Mammary epithelial cell (primary cell): ENCODE measurements at regions of chr6 and their contacts with region 1.

Region 1: GRCh38 chr6:146574211-146574610 is 24.6 kb upstream of the ADGB start:
- DNase-seq: no peak
- H3K4me3 ChIP-seq: no peak overlapping the region
- H3K27ac ChIP-seq: no peak overlapping the region
- H3K4me1 ChIP-seq: no peaks in the 10 kb centered on the region
- H3K27me3 ChIP-seq: no peaks in the 10 kb centered on the region
- CTCF ChIP-seq: no peak

Region 2: GRCh38 chr6:145600299-145600698 is 973.9 kb before region 1 on chr6:
- CTCF ChIA-PET with region 1: interaction called, 10 read pairs
- dilution Hi-C with region 1: no loop called
- in situ Hi-C with region 1: no loop called
- intact Hi-C with region 1: no loop called
- DNase-seq: no peak
- H3K4me3 ChIP-seq: no peak overlapping the region
- H3K27ac ChIP-seq: no peak overlapping the region
- H3K4me1 ChIP-seq: no peaks in the 10 kb centered on the region
- H3K27me3 ChIP-seq: no peaks in the 10 kb centered on the region
- CTCF ChIP-seq: no peak

Region 3: GRCh38 chr6:146224988-146225387 is 349.2 kb before region 1 on chr6:
- CTCF ChIA-PET with region 1: no interaction called
- dilution Hi-C with region 1: no loop called
- in situ Hi-C with region 1: no loop called
- intact Hi-C with region 1: no loop called
- DNase-seq: no peak
- H3K4me3 ChIP-seq: no peak overlapping the region
- H3K27ac ChIP-seq: no peak overlapping the region
- H3K4me1 ChIP-seq: no peaks in the 10 kb centered on the region
- H3K27me3 ChIP-seq: no peaks in the 10 kb centered on the region
- CTCF ChIP-seq: no peak